H1 (cell line): ENCODE measurements at regions of chr11 and their contacts with region 1.

Region 1: DNA sequence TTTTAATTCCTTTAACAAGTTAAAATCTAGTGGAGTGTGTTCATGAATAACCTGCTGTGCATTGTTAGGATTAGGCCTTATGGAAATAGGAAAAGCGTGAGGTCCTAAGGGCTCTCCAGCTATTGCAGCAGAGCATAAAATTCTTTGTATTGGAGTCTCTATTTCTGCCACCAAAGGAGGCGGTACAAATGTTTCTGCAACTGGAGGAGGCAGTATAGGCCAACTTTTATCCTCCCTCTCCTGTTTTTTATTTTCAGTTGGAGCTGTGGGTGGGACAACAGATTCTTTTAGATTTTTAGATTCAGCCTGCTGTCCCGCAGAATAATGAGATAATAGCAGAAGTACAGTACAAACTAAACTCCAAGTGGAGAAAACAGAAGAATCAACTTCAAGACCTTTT is 26.2 kb downstream of the OR10A6 start:
- DNase-seq: no peak
- H3K4me3 ChIP-seq: peak overlapping the region in 2 of 4 experiments; percentile 25 to 30; a peak in 1 of 8 replicates
- H3K27ac ChIP-seq: no peak overlapping the region
- H3K4me1 ChIP-seq: peaks cover 6 to 21% (median 16%) of the 10 kb centered on the region in 4 experiments
- H3K27me3 ChIP-seq: no peaks in the 10 kb centered on the region
- CTCF ChIP-seq: peak in 2 of 3 experiments; percentile 50 to 63; a peak in 3 of 4 replicates
- EP300 ChIP-seq: no peak
- POLR2A ChIP-seq: no peak
- RAD21 ChIP-seq: peak; percentile 69 to 73

Region 2: GRCh38 chr11:7696424-7696823 is 208.5 kb before region 1 on chr11:
- CTCF ChIA-PET with region 1: no interaction called
- POLR2A ChIA-PET with region 1: no interaction called
- DNase-seq: no peak
- H3K4me3 ChIP-seq: no peak overlapping the region
- H3K27ac ChIP-seq: no peak overlapping the region
- H3K4me1 ChIP-seq: 0 out of 7 replicates have a peak, but pooled peaks cover 0 to 2% (median 0%) of the 10 kb centered on the region in 4 experiments
- H3K27me3 ChIP-seq: no peaks in the 10 kb centered on the region
- CTCF ChIP-seq: no peak
- EP300 ChIP-seq: no peak
- POLR2A ChIP-seq: no peak
- RAD21 ChIP-seq: no peak

Region 3: GRCh38 chr11:7977232-7977917 is 72.5 kb after region 1 on chr11:
- CTCF ChIA-PET with region 1: interaction called, 127 read pairs
- POLR2A ChIA-PET with region 1: interaction called, 38 read pairs
- DNase-seq: no peak
- H3K4me3 ChIP-seq: no peak overlapping the region
- H3K27ac ChIP-seq: no peak overlapping the region
- H3K4me1 ChIP-seq: peaks cover 0 to 4% (median 0%) of the 10 kb centered on the region in 4 experiments; a peak in 3 of 7 replicates
- H3K27me3 ChIP-seq: no peaks in the 10 kb centered on the region
- CTCF ChIP-seq: no peak
- EP300 ChIP-seq: no peak
- POLR2A ChIP-seq: no peak
- RAD21 ChIP-seq: no peak